ENCODE measurements at regions of chr5 and their contacts with region 1.

Region 1: GRCh38 chr5:112146323-112147226 is 272.5 kb downstream of the EPB41L4A start:
- DNase-seq: no peak
- H3K4me3 ChIP-seq: no peak overlapping the region
- H3K27ac ChIP-seq: peak overlapping the region in 1 of 4 donors; percentile 60
- H3K4me1 ChIP-seq: peaks cover 8 to 17% (median 13%) of the 10 kb centered on the region in 4 donors
- H3K27me3 ChIP-seq: no peaks in the 10 kb centered on the region
- CTCF ChIP-seq: peak; percentile 77 to 87 (median 86)
- EP300 ChIP-seq: no peak
- POLR2A ChIP-seq: no peak

Region 2: GRCh38 chr5:111158105-111158744 is 988.4 kb before region 1 on chr5:
- intact Hi-C with region 1: loop called (anchors 5 kb)
- DNase-seq: no peak
- H3K4me3 ChIP-seq: no peak overlapping the region
- H3K27ac ChIP-seq: no peak overlapping the region
- H3K4me1 ChIP-seq: no peaks in the 10 kb centered on the region
- H3K27me3 ChIP-seq: no peaks in the 10 kb centered on the region
- CTCF ChIP-seq: peak in 2 of 3 experiments; percentile 97 to 98
- EP300 ChIP-seq: no peak
- POLR2A ChIP-seq: no peak

Region 3: GRCh38 chr5:111530298-111530740 is 616.3 kb before region 1 on chr5:
- intact Hi-C with region 1: loop called (anchors 5 kb)
- DNase-seq: peak; percentile 94
- H3K4me3 ChIP-seq: no peak overlapping the region
- H3K27ac ChIP-seq: peak overlapping the region in 2 of 4 donors; percentile 50 to 52
- H3K4me1 ChIP-seq: peaks cover 4 to 16% (median 7%) of the 10 kb centered on the region in 4 donors
- H3K27me3 ChIP-seq: no peaks in the 10 kb centered on the region
- CTCF ChIP-seq: no peak
- EP300 ChIP-seq: no peak
- POLR2A ChIP-seq: no peak

Region 4: GRCh38 chr5:111550279-111551020 is 596.1 kb before region 1 on chr5:
- intact Hi-C with region 1: loop called (anchors 1 kb)
- DNase-seq: peak; percentile 94
- H3K4me3 ChIP-seq: no peak overlapping the region
- H3K27ac ChIP-seq: peak overlapping the region; percentile 33 to 71 (median 46)
- H3K4me1 ChIP-seq: peaks cover 7 to 21% (median 13%) of the 10 kb centered on the region in 4 donors
- H3K27me3 ChIP-seq: no peaks in the 10 kb centered on the region
- CTCF ChIP-seq: peak; percentile 70 to 72 (median 72)
- EP300 ChIP-seq: no peak
- POLR2A ChIP-seq: no peak

Region 5: GRCh38 chr5:111757355-111758283 is 389.0 kb before region 1 on chr5:
- intact Hi-C with region 1: loop called (anchors 5 kb)
- DNase-seq: peak; percentile 97
- H3K4me3 ChIP-seq: peak overlapping the region; percentile 65 to 71 (median 68)
- H3K27ac ChIP-seq: peak overlapping the region; percentile 88 to 94 (median 90)
- H3K4me1 ChIP-seq: peaks cover 23 to 43% (median 39%) of the 10 kb centered on the region in 4 donors
- H3K27me3 ChIP-seq: no peaks in the 10 kb centered on the region
- CTCF ChIP-seq: peak in 2 of 3 experiments; percentile 14 to 57
- EP300 ChIP-seq: no peak
- POLR2A ChIP-seq: no peak

Region 6: GRCh38 chr5:112293587-112293986 is 147.0 kb after region 1 on chr5:
- intact Hi-C with region 1: no loop called
- DNase-seq: no peak
- H3K4me3 ChIP-seq: no peak overlapping the region
- H3K27ac ChIP-seq: no peak overlapping the region
- H3K4me1 ChIP-seq: peaks cover 0 to 9% (median 5%) of the 10 kb centered on the region in 4 donors
- H3K27me3 ChIP-seq: no peaks in the 10 kb centered on the region
- CTCF ChIP-seq: no peak
- EP300 ChIP-seq: no peak
- POLR2A ChIP-seq: no peak